Panc1 (cell line): ENCODE measurements at regions of chr17 and their contacts with region 1.

Region 1: GRCh38 chr17:61862975-61863800 is at the start of gene BRIP1:
- DNase-seq: peak; percentile 66
- ATAC-seq: peak; percentile 100
- H3K4me3 ChIP-seq: peak within 1 kb of the TSS; percentile 65 to 93
- H3K27ac ChIP-seq: peak within 1 kb of the TSS; percentile 85
- H3K4me1 ChIP-seq: peaks cover 17% of the 10 kb centered on the region; the same call in 1 of the 2 replicates
- H3K27me3 ChIP-seq: no peaks in the 10 kb centered on the region
- CTCF ChIP-seq: no peak
- total RNA-seq, gene BRIP1: 9.4 TPM

Region 2: GRCh38 chr17:61770752-61771533 is 92.2 kb before region 1 on chr17:
- CTCF ChIA-PET with region 1: no interaction called
- POLR2A ChIA-PET with region 1: interaction called, 11 read pairs
- in situ Hi-C with region 1: no loop called
- intact Hi-C with region 1: no loop called
- DNase-seq: no peak
- ATAC-seq: no peak
- H3K4me3 ChIP-seq: no peak overlapping the region
- H3K27ac ChIP-seq: no peak overlapping the region
- H3K4me1 ChIP-seq: no peaks in the 10 kb centered on the region
- H3K27me3 ChIP-seq: no peaks in the 10 kb centered on the region
- CTCF ChIP-seq: no peak

Region 3: DNA sequence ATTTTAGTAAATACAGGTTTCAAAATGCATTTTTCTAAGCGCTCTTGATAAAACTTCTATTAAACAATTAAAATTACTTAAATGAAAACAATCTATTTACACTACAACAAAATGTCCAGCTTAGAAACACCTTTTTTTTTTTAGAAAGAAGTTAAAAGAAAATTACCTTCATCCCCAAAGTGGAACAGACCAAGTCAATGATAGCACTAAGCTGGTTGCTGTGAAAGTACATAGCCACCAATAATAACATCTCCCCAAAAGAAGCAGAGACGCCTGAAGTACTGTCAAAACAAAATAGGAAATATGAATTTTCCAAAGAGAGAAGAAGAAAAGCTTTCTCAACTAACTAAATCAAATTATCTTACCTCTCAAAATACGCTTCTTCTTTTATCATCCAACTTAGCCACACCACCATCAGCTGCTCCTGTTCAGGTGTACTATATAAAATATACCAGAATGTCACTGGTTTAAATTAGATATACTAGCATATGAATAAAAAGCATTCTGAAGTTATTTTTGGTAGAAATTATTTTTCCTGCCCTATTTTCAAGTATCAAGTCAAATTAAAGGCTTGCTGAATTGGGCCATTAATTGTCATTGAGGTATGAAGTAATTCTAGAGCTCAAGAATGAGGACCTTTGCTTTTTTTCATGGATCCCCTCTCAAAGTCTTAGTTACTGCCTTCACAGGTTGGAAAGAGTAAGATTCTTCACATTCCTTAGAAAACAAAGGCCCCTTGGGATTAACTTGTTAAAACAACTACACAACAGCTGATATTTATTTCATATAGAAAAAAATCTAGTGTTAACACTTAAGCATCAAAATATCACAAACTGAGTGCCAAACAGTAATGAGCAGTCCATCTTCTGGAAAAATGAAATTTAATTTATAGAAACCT is 34.4 kb after region 1 on chr17:
- CTCF ChIA-PET with region 1: no interaction called
- POLR2A ChIA-PET with region 1: no interaction called
- in situ Hi-C with region 1: no loop called
- intact Hi-C with region 1: no loop called
- DNase-seq: no peak
- ATAC-seq: no peak
- H3K4me3 ChIP-seq: no peak overlapping the region
- H3K27ac ChIP-seq: no peak overlapping the region
- H3K4me1 ChIP-seq: no peaks in the 10 kb centered on the region
- H3K27me3 ChIP-seq: no peaks in the 10 kb centered on the region
- CTCF ChIP-seq: no peak

Region 4: GRCh38 chr17:61927200-61928165 is 64.3 kb after region 1 on chr17 and contains the start of gene INTS2:
- CTCF ChIA-PET with region 1: no interaction called
- POLR2A ChIA-PET with region 1: no interaction called
- in situ Hi-C with region 1: no loop called
- intact Hi-C with region 1: no loop called
- DNase-seq: peak; percentile 63
- ATAC-seq: peak; percentile 95
- H3K4me3 ChIP-seq: peak within 1 kb of the TSS; percentile 77 to 96
- H3K27ac ChIP-seq: peak within 1 kb of the TSS; percentile 95
- H3K4me1 ChIP-seq: peaks cover 16% of the 10 kb centered on the region
- H3K27me3 ChIP-seq: no peaks in the 10 kb centered on the region
- CTCF ChIP-seq: no peak
- total RNA-seq, gene INTS2: 32.5 TPM

Region 5: DNA sequence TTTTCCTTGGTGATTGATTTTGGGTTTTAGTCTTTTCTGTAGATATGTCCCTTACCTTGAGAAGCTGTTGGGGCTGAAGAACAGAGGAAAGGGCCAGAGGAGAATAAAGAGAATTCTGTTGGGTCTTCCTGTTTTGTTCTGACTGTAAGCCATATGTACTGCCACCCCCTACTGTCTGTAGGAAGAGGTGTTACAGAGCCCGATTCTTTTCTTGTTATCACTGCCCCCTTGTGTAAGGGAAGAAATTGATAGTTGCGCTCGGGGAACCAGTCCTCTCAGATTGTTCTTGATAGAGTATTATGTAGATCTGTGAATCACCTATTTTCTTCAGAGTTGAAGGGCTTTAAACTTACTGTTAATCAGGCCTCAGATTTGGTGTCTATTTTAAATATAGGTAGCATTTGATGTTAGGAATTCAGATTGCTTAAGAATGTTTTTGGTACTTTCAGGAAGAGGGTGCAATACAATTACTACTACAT is 1105.3 kb after region 1 on chr17:
- CTCF ChIA-PET with region 1: no interaction called
- POLR2A ChIA-PET with region 1: no interaction called
- in situ Hi-C with region 1: no loop called
- intact Hi-C with region 1: no loop called
- DNase-seq: peak; percentile 77
- ATAC-seq: peak; percentile 76
- H3K4me3 ChIP-seq: peak overlapping the region; percentile 77 to 95
- H3K27ac ChIP-seq: peak overlapping the region; percentile 61
- H3K4me1 ChIP-seq: peaks cover 28% of the 10 kb centered on the region
- H3K27me3 ChIP-seq: no peaks in the 10 kb centered on the region
- CTCF ChIP-seq: peak; percentile 89